SK-N-SH (cell line): ENCODE measurements at regions of chr7 and their contacts with region 1.

Region 1: GRCh38 chr7:151110941-151111645 is 24.8 kb downstream of the AGAP3 start:
- DNase-seq: peak; percentile 96
- H3K4me3 ChIP-seq: no peak overlapping the region; a peak in 1 of 4 replicates
- H3K27ac ChIP-seq: no peak overlapping the region
- H3K4me1 ChIP-seq: peaks cover 24 to 36% of the 10 kb centered on the region in 2 experiments
- H3K27me3 ChIP-seq: no peaks in the 10 kb centered on the region
- CTCF ChIP-seq: peak; percentile 94
- EP300 ChIP-seq: no peak
- RAD21 ChIP-seq: peak; percentile 90

Region 2: GRCh38 chr7:150962553-150963399 is 148.3 kb before region 1 on chr7:
- CTCF ChIA-PET with region 1: interaction called, 21 read pairs
- POLR2A ChIA-PET with region 1: no interaction called
- DNase-seq: peak; percentile 94
- H3K4me3 ChIP-seq: peak overlapping the region in 1 of 2 experiments; percentile 48; a peak in 1 of 4 replicates
- H3K27ac ChIP-seq: peak overlapping the region in 1 of 2 experiments; percentile 97; a peak in 2 of 4 replicates
- H3K4me1 ChIP-seq: peaks cover 0 to 89% of the 10 kb centered on the region in 2 experiments; a peak in 2 of 4 replicates
- H3K27me3 ChIP-seq: peaks cover 16% of the 10 kb centered on the region
- CTCF ChIP-seq: peak; percentile 95
- EP300 ChIP-seq: peak in 1 of 2 experiments; percentile 39; a peak in 1 of 4 replicates
- RAD21 ChIP-seq: peak; percentile 94

Region 3: DNA sequence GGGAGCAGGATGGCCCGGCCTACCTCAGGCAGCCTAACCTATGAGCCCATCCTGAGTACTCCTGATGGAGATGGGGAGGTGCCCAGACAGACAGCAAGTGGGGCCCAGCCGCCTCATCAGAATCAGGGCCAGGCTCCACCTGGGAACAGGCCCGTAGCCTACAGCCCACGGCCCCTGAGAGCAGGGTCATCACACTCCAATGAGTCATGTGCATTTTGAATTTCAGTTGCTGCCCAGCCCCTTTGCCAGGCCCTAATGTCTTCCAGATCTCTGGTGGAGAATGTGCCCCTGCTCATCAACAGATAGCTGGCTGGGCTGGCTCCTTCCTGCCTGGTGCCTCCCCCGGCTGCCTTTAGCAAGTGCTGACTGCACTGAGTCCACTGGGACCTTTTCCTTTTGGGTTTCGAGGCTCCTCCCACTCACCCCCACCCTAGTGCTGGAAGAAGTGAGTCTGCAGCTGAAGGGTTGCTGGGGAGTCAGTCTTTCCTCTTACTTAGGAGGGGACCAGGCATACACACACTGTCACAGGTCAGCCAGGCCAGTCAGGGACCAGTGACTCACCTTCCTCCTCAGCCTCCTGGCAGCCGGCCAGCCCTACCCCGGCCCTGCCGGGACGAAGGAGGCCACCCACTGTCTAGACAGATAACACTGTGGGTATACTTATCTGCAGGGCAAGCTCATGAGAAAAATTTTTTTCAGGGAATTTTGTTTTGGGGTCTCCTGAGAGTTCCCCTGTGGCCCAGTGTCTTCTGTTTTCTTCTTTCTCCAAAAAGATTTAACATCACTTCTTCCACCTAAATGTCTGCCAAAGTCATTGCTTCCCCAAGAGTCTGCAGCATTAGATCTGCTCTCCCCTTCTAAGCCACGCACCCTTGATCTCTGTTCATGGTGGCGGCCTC is 71.9 kb before region 1 on chr7:
- CTCF ChIA-PET with region 1: interaction called, 24 read pairs
- POLR2A ChIA-PET with region 1: interaction called, 4 read pairs
- DNase-seq: peak; percentile 87
- H3K4me3 ChIP-seq: no peak overlapping the region
- H3K27ac ChIP-seq: peak overlapping the region; percentile 98
- H3K4me1 ChIP-seq: peaks cover 25 to 30% of the 10 kb centered on the region in 2 experiments
- H3K27me3 ChIP-seq: no peaks in the 10 kb centered on the region
- CTCF ChIP-seq: no peak
- EP300 ChIP-seq: peak in 1 of 2 experiments; percentile 77; a peak in 1 of 4 replicates
- RAD21 ChIP-seq: peak; percentile 23; the same call in 1 of the 2 replicates

Region 4: DNA sequence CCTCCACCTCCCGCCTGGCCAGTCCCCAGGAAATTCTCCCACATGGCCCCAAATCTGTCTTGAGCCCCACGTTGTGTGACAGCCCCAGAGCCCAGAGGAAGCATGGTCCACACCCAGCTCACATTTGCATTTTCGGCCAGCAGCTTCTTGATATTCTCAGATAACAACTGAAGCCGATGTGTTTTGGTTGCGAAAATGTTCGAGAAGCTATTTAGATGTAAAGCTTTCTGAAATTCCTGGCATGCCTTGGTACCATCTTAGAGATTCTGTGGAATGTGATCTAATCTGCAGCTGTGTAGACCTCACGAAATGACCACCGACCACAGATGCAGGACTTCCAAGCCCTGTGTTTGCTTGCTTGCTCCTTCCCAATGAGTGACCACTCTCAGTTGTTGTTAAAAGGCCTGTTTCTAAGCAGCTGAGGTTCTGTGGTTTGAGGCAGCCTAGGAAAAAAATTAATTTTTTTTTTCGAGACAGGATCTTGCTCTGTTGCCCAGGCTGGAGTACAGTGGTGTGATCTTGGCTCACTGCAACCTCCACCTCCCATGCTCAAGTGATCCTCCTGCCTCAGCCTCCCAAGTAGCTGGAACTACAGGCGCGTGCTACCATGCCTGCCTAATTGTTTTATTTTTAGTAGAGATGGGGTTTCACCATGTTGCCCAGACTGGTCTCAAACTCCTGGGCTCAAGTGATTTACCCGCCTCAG is 42.9 kb before region 1 on chr7:
- CTCF ChIA-PET with region 1: interaction called, 126 read pairs
- POLR2A ChIA-PET with region 1: no interaction called
- DNase-seq: no peak
- H3K4me3 ChIP-seq: no peak overlapping the region
- H3K27ac ChIP-seq: no peak overlapping the region
- H3K4me1 ChIP-seq: no peaks in the 10 kb centered on the region; a peak in 2 of 4 replicates
- H3K27me3 ChIP-seq: no peaks in the 10 kb centered on the region
- CTCF ChIP-seq: no peak
- EP300 ChIP-seq: no peak
- RAD21 ChIP-seq: no peak

Region 5: DNA sequence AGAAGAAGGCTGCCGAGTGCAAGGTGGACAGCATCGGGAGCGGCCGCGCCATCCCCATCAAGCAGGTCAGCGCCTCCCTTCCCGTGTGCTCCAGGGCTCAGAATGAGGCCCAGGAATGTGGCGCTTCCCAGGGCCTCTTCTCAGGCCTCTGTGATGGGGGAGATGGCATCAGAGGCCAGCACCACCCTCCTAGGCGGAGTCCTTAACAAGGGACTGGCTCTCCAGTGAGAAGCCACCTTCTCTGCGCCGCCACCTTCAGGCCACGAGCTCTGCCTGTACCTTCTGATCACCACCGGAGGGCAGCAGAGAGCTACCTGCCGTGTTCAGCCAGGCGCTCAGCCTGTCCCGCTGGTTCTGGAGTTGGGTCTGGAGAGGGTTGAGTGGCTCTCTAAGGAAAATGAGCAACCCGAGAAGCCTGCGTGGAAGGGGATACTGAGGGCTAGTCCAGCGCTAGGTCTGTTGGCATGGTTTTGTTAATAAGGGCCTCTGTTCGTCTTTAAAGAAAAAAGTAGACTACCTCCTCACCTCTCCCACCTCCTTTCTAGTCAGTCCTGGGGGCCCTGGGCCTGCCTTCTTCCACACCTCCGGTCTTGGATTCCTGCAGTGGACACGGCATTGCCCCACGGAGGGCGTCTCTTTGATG is 12.8 kb after region 1 on chr7:
- CTCF ChIA-PET with region 1: interaction called, 239 read pairs
- POLR2A ChIA-PET with region 1: no interaction called
- DNase-seq: peak; percentile 98
- H3K4me3 ChIP-seq: no peak overlapping the region; a peak in 1 of 4 replicates
- H3K27ac ChIP-seq: no peak overlapping the region
- H3K4me1 ChIP-seq: no peaks in the 10 kb centered on the region; a peak in 1 of 4 replicates
- H3K27me3 ChIP-seq: no peaks in the 10 kb centered on the region
- CTCF ChIP-seq: peak; percentile 100
- EP300 ChIP-seq: no peak
- RAD21 ChIP-seq: peak; percentile 98

Region 6: DNA sequence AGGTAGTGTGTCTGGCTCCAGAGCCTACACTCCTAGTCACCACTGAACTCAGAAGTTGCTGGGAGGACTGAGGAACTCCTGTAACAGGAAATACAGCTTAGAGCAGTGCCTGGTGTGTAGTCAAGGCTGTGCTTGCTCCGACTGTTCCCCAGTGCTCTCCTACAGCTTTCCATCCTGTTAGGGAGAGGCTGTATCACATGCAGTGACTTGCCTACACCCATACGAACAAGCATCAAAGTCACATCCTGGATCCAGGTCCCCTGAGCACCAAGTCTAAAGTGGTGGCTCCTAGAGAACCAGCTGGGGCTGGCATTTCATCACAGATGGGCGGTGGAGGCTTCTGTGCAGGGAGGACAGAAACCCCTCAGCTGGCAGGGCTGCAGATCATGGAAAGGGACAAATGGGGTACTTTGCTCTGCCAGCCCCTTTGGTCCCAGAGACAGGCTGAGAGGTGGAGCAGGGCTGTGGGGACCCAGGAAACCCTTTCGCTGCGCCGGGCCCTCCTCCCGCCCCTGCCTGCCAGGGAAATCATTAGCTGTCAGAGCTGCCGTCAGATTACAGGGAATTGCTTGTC is 68.3 kb after region 1 on chr7:
- CTCF ChIA-PET with region 1: interaction called, 10 read pairs
- POLR2A ChIA-PET with region 1: no interaction called
- DNase-seq: peak; percentile 22
- H3K4me3 ChIP-seq: no peak overlapping the region
- H3K27ac ChIP-seq: no peak overlapping the region
- H3K4me1 ChIP-seq: no peaks in the 10 kb centered on the region
- H3K27me3 ChIP-seq: peaks cover 58% of the 10 kb centered on the region
- CTCF ChIP-seq: no peak
- EP300 ChIP-seq: no peak
- RAD21 ChIP-seq: no peak